ENCODE measurements at regions of chr1 and their contacts with region 1.

Region 1: DNA sequence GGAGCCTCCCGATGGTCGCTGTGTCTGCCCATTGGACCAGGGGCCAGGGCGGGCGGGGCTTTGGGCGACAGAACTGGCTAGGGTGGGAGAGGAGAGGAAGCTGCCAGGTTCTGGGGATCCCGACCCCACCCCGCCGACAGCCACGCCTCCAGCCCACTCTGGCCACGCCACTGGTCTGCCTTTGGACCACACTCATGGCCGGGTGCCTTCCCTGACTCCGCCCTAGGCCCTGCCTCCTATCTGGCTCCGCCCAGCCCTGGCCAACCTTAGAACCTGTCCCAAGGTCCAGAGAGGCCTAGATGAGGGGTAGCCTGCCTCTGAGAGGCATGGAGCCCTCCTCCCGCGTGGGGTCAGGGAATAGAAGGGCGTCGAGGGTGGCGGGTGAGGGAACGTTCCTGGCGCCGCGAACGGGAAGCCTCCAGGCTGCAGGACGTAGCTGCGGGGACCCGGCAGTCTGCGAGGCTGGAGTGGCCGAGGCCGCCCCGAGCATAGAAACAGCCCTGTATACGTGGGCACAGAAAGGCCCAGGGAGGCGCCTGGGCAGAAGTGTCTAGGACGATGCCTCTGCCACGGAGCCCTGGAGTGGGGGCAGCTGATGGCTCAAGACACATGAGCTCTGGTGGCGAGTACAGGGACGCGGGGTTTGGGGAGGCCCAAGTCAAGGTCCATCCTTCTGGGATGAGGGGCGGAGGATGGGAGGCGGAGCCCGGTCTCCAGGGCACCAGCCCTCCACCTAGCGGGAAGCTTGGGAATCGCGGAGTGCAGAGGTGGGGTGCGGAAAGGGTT is 11.5 kb upstream of the COL16A1 start:
- H3K4me3 ChIP-seq: no peak overlapping the region
- H3K27ac ChIP-seq: no peak overlapping the region
- H3K4me1 ChIP-seq: no peaks in the 10 kb centered on the region
- CTCF ChIP-seq: peak; percentile 64

Region 2: DNA sequence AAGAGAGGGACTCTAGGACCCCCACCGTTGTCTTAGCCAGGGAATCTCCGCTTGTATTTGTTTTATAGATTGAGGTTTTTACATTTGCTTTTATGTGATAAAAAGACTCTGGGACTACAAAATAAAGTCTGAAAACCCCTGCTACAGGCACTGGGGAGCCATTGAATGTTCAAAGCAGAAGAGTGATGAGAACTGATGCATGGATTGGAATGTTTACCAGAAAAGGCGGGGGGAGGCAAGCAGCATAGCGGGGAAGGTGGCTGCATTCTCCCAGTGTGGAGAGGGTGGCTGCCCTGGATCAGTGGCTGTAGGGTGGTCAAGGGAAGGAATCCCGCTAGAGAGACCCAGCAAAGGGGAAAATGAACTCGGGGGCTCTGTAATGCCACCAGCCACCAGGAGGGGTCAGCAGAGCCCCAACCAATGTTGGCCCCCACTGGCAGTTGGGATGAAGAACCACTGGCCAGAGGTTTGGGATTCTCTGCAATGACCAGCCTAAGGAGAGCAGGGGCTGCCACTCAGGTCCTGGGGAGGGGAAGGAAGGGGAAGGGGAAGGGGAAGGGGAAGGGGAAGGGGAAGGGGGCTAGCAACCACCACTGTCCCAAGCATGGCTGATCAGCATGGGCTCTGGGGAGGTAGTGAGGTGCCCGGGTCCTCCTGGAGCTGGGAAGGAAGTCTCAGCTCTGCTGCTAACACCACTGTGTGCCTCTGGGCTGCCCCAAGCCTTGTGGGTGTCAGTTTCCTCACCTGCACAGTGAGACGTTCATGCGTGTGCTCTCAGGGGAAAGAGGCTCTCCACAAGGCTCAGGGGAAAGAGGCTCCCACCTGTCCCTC is 51.4 kb before region 1 on chr1:
- CTCF ChIA-PET with region 1: interaction called, 77 read pairs
- POLR2A ChIA-PET with region 1: interaction called, 3 read pairs
- H3K4me3 ChIP-seq: no peak overlapping the region
- H3K27ac ChIP-seq: no peak overlapping the region
- H3K4me1 ChIP-seq: no peaks in the 10 kb centered on the region
- CTCF ChIP-seq: peak; percentile 82

Region 3: DNA sequence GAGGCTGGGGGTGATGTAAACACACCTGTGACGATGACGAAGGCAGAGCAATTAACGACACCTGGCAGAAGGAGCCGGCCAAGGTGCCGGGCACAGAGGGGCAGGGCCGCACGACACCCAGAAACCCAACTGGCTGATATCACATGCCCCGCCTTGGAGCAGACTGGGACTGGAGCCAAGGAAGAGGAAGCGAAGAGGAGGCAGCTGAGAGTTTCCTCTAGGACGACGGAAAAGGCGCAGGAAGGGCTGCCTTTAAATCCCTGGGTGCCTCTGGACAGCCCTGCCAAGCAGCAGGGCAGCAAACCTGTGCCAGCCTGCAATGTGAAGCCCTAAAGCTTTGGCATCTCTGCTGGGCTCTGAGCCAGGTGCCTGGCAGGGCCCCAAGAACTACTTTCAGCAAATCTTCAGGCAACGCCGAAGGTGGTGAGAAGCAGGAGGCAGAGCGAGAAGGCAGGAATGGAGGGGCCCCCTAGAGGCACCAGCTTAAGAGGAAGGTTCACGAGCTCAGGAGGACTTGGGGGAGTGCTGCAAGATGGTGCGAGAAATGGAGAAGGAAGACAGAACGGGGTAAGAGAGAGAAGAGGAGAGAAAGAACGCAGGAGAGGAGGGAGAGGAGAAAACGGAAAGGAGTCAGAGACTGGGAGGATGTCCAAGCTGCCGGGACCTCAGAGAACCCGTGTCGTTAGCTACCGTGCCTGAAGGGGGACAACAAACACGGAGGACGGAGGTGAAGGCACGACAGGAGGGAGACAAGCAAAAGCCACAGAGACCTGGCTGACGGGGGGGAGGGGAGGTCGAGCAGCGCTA is 45.3 kb before region 1 on chr1:
- CTCF ChIA-PET with region 1: interaction called, 77 read pairs
- POLR2A ChIA-PET with region 1: no interaction called
- H3K4me3 ChIP-seq: no peak overlapping the region
- H3K27ac ChIP-seq: no peak overlapping the region
- H3K4me1 ChIP-seq: peaks cover 5% of the 10 kb centered on the region
- CTCF ChIP-seq: peak; percentile 96

Region 4: GRCh38 chr1:31683997-31684396 is 31.3 kb before region 1 on chr1:
- CTCF ChIA-PET with region 1: interaction called, 14 read pairs
- POLR2A ChIA-PET with region 1: no interaction called
- H3K4me3 ChIP-seq: no peak overlapping the region
- H3K27ac ChIP-seq: no peak overlapping the region
- H3K4me1 ChIP-seq: no peaks in the 10 kb centered on the region
- CTCF ChIP-seq: 0 out of 2 replicates have a peak, but pooled peaks have one; percentile 20

Region 5: DNA sequence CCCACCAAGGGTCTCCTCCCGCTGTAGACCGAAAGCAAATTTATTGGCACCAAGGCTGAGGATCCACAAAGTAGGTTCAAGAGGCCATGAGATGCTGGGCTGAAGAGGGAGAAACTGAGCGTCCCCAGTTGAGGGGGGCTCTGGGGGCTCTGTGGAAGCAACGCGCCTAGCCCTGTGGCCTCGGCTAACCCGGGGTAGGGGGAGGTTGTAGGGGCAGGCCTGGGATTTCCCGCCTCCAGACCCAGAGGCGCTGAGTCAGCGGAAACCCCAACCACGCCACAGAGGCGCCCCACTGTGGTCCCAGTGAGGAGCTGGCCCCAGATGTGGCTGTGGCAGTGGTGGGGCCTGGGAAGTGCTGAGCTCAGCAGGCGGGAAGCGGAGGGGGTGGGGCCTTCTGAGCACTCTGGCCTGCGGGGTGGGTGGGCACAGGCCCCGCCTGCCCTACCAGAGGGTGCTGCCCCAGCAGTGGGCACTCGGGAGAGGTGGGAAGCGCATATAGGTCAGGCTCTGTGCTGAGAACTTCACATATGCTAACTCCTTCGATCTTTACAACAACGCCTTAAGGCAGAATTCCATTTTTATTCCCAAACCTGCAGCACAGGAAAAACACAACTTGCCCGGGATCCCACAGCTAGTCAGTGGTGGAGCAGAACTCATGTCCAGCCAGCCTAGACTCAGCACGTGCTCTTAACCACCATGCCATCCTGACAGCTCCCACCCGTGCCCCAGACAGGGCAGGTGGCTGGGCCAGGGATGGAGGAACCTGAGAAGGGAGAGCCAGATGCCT is 10.0 kb before region 1 on chr1:
- CTCF ChIA-PET with region 1: interaction called, 22 read pairs
- POLR2A ChIA-PET with region 1: interaction called, 6 read pairs
- H3K4me3 ChIP-seq: no peak overlapping the region
- H3K27ac ChIP-seq: no peak overlapping the region
- H3K4me1 ChIP-seq: peaks cover 3% of the 10 kb centered on the region
- CTCF ChIP-seq: peak; percentile 27; the same call in 1 of the 2 replicates

Region 6: GRCh38 chr1:31745096-31745945 is 30.0 kb after region 1 on chr1:
- CTCF ChIA-PET with region 1: interaction called, 24 read pairs
- POLR2A ChIA-PET with region 1: interaction called, 4 read pairs
- H3K4me3 ChIP-seq: no peak overlapping the region
- H3K27ac ChIP-seq: no peak overlapping the region
- H3K4me1 ChIP-seq: no peaks in the 10 kb centered on the region; the same call in 1 of the 2 replicates
- CTCF ChIP-seq: peak; percentile 60

Measured in HEK293 (cell line).